ENCODE measurements at regions of chr3 and their contacts with region 1.

Region 1: DNA sequence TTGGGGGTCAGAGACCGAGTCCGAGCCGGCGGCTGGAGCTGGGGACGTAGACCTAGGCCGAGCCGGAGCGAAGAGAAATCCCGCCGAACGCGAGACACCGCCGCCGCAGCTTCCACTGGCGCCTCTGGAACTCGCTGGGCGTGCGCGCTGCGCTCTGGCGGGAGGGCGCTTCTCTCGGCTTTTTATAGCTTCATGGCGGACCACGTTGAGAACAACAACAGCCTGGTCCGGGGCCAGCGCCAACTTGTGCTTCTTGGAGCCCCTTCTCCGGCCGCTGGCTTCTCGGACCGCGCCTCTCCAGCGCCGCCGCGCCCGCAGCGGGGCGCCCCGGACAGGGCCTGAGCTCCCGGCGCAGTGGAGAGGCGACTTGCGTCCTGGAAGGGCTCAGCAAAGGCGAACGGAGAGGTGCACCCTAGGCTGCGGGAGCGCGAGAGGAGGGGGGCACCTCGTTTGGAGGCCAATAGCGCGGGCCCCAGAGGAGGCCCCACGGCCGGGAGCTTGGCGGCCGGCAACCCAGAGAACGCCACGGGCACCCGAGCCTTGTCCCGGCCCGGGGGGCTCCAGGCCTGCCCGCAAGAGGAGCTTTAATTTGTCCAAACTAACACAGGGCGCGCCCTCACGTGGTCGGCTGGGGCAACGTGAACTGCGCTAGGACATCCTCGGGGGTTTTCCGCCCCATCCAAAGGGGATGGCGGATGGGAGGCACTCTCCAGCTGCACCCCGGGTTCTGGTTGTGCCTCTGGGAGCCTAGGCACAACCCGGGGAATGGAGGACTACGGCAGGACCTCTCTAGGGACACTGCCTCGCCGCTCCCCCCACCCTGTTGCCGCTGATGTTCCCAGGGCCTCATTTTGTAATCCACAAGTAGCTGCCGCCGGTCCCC is 37.7 kb downstream of the HMCES start:
- H3K4me3 ChIP-seq: peak overlapping the region; percentile 97
- H3K27ac ChIP-seq: peak overlapping the region; percentile 83; the same call in 1 of the 2 replicates
- H3K4me1 ChIP-seq: no peaks in the 10 kb centered on the region
- CTCF ChIP-seq: peak; percentile 85

Region 2: GRCh38 chr3:129278439-129278970 is 37.9 kb before region 1 on chr3 and contains the start of gene HMCES:
- CTCF ChIA-PET with region 1: no interaction called
- POLR2A ChIA-PET with region 1: interaction called, 42 read pairs
- H3K4me3 ChIP-seq: peak within 1 kb of the TSS; percentile 83
- H3K27ac ChIP-seq: peak within 1 kb of the TSS; percentile 91
- H3K4me1 ChIP-seq: peaks cover 4% of the 10 kb centered on the region
- CTCF ChIP-seq: no peak

Region 3: GRCh38 chr3:129330409-129330808 is 14.0 kb after region 1 on chr3:
- CTCF ChIA-PET with region 1: interaction called, 11 read pairs
- POLR2A ChIA-PET with region 1: interaction called, 6 read pairs
- H3K4me3 ChIP-seq: no peak overlapping the region
- H3K27ac ChIP-seq: no peak overlapping the region
- H3K4me1 ChIP-seq: no peaks in the 10 kb centered on the region
- CTCF ChIP-seq: no peak

Region 4: GRCh38 chr3:129341331-129342141 is 25.2 kb after region 1 on chr3:
- CTCF ChIA-PET with region 1: no interaction called
- POLR2A ChIA-PET with region 1: interaction called, 10 read pairs
- H3K4me3 ChIP-seq: no peak overlapping the region
- H3K27ac ChIP-seq: no peak overlapping the region
- H3K4me1 ChIP-seq: no peaks in the 10 kb centered on the region
- CTCF ChIP-seq: no peak

Region 5: GRCh38 chr3:129439817-129440617 is 123.6 kb after region 1 on chr3 and contains the starts of genes IFT122 and MBD4:
- CTCF ChIA-PET with region 1: no interaction called
- POLR2A ChIA-PET with region 1: interaction called, 19 read pairs
- H3K4me3 ChIP-seq: peak within 1 kb of the TSS; percentile 86
- H3K27ac ChIP-seq: peak within 1 kb of the TSS; percentile 90
- H3K4me1 ChIP-seq: 0 out of 2 replicates have a peak, but pooled peaks cover 4% of the 10 kb centered on the region
- CTCF ChIP-seq: peak; percentile 23; the same call in 1 of the 2 replicates

Measured in HEK293 (cell line).